ENCODE measurements at regions of chr19 and their contacts with region 1.

Region 1: DNA sequence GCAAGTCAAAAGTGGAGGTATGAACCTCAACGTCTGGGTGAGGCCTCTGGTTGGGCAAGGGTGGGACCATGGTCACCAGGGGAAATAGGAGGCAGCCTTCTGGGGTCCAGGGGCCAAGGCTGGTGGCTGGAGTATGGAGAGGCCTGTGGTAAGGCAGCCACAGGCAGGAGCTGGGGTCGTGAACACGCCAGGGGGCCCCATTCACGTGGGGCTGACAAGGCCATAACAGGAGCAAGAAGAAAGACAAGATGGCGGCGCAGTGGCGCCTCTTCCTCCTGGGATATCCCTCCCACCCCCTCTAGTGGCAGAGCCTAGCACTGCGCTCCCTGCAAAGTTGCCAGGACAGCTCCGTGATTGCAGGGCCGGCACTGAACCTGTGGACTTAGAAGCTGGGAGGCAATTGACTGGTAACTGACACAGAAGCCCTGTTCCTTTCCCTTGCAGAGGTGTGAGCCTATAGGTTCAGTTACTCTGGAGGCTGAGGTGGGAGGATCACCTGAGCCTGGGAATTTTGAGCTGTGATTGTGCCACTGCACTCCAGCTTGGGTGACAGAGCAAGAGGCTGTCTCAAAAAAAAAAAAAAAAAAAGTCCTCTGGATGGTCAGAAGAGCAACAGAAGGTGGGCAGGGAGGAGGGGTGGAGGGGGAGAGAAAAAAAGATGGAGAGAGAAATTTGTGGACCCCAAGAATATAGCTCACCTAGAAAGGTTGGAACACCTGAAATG is 19.7 kb upstream of the EDDM13 start:
- DNase-seq: peak; percentile 96
- ATAC-seq: peak; percentile 97
- H3K4me3 Mint-ChIP-seq: no peak overlapping the region
- H3K27ac Mint-ChIP-seq: no peak overlapping the region
- H3K4me1 Mint-ChIP-seq: no peaks in the 10 kb centered on the region
- H3K27me3 Mint-ChIP-seq: peaks cover 12% of the 10 kb centered on the region; the same call in 1 of the 2 replicates
- CTCF ChIP-seq: peak; percentile 91

Region 2: DNA sequence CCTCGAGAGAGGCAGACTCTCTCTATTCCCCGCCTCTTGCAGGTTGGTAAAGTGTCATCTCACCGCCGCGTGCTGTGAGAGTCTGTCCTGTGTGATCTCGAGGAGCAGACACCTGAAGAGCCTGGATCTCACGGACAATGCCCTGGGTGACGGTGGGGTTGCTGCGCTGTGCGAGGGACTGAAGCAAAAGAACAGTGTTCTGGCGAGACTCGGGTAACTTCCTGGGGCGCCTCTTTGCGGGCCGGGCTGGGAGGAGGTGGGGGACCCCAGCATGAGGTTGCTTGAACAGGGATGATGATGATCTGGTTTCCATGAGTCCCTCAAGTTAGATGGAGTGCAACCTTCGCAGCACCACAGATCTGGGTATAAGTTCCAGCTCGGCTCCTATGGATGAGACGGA is 199.3 kb before region 1 on chr19:
- CTCF ChIA-PET with region 1: no interaction called
- POLR2A ChIA-PET with region 1: no interaction called
- DNase-seq: no peak
- ATAC-seq: no peak
- H3K4me3 Mint-ChIP-seq: no peak overlapping the region
- H3K27ac Mint-ChIP-seq: no peak overlapping the region
- H3K4me1 Mint-ChIP-seq: no peaks in the 10 kb centered on the region
- H3K27me3 Mint-ChIP-seq: peaks cover 32% of the 10 kb centered on the region
- CTCF ChIP-seq: no peak

Region 3: DNA sequence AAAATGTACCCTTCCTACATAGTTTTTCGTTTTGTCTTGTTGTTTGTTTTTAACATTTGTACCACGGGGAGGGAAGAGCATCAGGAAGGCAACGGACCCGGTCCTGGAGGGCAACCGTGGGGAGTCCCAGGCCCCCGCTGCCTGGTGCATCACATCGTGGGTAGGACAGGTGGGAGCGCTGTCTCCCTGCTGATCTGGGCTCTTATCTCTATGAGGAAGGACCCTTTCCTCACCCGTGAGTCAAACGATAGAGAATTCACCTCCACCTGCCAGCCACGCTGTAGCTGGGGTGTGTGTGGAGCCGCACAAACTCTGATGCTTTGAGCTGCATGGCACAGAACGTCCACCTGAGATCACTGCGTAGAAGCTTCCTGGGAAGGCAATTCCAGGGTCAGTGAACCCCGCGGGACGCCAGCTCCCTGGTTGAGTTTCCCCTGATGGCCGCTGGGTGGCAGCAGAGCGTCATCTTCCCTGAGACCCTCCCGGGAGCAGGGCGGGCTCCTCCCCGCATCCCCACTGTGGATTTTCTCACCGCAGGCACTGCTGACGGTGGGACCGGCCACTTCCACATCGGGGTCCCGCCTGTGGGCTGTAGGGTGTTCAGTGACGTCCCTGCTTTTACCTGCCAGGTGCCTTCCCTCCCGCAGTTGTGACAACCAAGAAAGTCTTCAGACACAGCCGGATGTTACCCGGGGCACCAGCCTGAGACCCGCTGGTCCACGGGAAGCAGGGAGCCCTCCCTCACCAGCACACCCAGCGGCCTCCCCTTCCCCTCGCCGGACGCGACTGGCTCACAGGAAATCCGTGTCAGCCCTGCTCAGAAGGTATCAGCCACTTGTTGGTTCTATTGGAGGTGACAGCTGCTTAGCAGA is 186.5 kb before region 1 on chr19:
- CTCF ChIA-PET with region 1: interaction called, 41 read pairs
- POLR2A ChIA-PET with region 1: no interaction called
- DNase-seq: peak; percentile 86
- ATAC-seq: peak; percentile 90
- H3K4me3 Mint-ChIP-seq: peak overlapping the region; percentile 59
- H3K27ac Mint-ChIP-seq: no peak overlapping the region
- H3K4me1 Mint-ChIP-seq: peaks cover 3% of the 10 kb centered on the region; the same call in 1 of the 2 replicates
- H3K27me3 Mint-ChIP-seq: peaks cover 24% of the 10 kb centered on the region
- CTCF ChIP-seq: peak; percentile 90

Region 4: GRCh38 chr19:56080669-56081401 is 172.0 kb before region 1 on chr19:
- CTCF ChIA-PET with region 1: interaction called, 19 read pairs
- POLR2A ChIA-PET with region 1: no interaction called
- DNase-seq: peak; percentile 91
- ATAC-seq: peak; percentile 81
- H3K4me3 Mint-ChIP-seq: peak overlapping the region; percentile 85
- H3K27ac Mint-ChIP-seq: no peak overlapping the region
- H3K4me1 Mint-ChIP-seq: peaks cover 23% of the 10 kb centered on the region
- H3K27me3 Mint-ChIP-seq: peaks cover 15% of the 10 kb centered on the region
- CTCF ChIP-seq: peak; percentile 64

Region 5: DNA sequence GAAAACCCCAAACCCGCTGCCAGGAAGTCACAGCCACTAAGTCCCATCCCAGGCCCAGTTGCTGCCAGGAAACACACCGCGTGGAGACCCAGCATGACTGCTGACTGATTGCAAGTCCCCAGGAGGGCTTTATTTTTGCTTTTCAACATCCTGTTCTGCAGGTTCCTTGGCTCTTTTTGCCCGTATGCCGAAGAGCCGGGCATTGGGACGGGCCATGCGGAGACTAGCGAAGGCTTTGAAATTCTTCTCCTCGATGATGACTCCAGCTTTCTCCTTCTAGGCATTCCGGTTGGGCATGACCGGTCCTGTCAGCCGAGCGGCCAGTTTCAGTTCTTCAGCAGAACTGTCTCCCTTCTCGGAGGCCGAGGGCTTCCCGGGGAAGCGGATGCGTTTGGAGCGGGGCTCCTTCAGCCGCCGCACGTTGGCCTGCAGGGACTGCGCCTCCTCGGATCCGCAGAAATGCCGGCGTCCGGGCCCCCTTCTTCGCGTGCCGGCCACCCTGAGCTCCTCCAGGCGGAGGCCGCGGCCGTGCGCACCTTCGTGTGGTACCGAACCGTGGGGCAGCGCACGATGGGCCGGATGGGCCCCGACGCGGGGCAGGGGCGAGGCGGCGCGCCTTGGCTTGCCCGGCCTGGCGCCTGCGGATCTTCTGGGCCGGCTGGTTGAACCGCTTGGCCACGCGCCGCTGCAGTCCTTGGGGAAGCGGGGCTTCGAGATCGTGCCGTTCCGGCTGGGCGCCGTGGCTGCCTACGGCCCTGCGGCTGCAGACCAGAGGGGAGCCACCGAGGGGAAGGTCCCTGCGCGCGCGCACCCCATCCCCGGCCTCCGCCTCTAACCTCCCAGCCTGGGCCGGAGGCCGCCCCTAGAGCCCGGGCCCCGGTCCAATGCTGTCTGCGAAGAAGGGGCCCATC is 35.6 kb before region 1 on chr19:
- CTCF ChIA-PET with region 1: interaction called, 13 read pairs
- POLR2A ChIA-PET with region 1: no interaction called
- DNase-seq: peak; percentile 72
- ATAC-seq: peak; percentile 77
- H3K4me3 Mint-ChIP-seq: peak overlapping the region; percentile 57
- H3K27ac Mint-ChIP-seq: 0 out of 2 replicates have a peak overlapping the region, but pooled peaks have one; percentile 63
- H3K4me1 Mint-ChIP-seq: peaks cover 15% of the 10 kb centered on the region
- H3K27me3 Mint-ChIP-seq: peaks cover 15% of the 10 kb centered on the region
- CTCF ChIP-seq: no peak

Region 6: DNA sequence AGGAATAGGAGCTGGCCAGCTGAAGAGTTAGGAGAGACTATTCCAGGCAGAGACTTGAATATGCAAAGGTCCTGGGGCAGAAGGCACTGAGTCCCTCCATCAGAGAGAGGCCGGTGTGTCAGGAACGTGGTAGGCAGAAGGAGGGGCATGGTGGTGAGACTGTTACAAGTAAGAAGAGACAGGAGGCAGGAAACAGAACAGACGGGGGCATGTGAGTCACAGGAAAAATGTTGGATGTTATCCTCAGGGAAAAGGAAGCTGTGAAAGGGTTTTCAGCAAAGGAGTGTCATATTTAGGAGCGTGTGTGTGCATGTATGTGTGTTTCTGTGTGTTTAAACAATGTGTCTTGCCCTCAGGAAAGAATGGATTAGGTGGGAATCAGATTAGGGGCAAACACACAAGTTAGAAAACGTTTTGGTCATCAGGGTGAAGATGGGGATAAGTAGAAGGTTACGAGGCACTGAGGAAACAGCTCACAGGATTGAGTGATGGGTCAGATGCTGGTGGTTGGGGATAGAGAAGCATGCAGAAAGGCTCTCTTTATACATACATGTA is 20.8 kb after region 1 on chr19:
- CTCF ChIA-PET with region 1: interaction called, 17 read pairs
- POLR2A ChIA-PET with region 1: no interaction called
- DNase-seq: no peak
- ATAC-seq: no peak
- H3K4me3 Mint-ChIP-seq: no peak overlapping the region
- H3K27ac Mint-ChIP-seq: no peak overlapping the region
- H3K4me1 Mint-ChIP-seq: no peaks in the 10 kb centered on the region
- H3K27me3 Mint-ChIP-seq: no peaks in the 10 kb centered on the region; the same call in 1 of the 2 replicates
- CTCF ChIP-seq: no peak

Region 7: DNA sequence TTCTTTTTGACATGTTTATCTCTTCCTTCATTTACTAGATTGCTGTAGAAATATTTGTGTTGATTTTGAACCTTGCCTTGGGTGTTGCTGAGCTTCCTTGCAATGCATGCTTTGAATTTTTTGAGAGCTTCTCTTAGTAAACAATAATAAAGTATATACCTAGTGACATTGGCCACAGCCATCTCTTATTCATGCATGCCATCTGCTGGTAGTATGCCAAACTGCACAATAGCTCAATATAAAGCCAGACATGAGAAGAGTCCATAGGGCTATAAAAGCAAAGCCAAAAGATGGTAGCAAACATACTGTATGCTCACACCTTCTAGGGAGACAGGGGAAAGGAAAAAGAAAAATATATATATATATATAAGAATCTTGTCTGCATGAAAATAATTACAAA is 80.6 kb after region 1 on chr19:
- CTCF ChIA-PET with region 1: interaction called, 43 read pairs
- POLR2A ChIA-PET with region 1: no interaction called
- DNase-seq: peak; percentile 37
- ATAC-seq: peak; percentile 73
- H3K4me3 Mint-ChIP-seq: no peak overlapping the region
- H3K27ac Mint-ChIP-seq: no peak overlapping the region
- H3K4me1 Mint-ChIP-seq: no peaks in the 10 kb centered on the region
- H3K27me3 Mint-ChIP-seq: peaks cover 14% of the 10 kb centered on the region
- CTCF ChIP-seq: peak; percentile 41; the same call in 1 of the 2 replicates

Region 8: GRCh38 chr19:56348289-56348877 is 95.5 kb after region 1 on chr19:
- CTCF ChIA-PET with region 1: interaction called, 10 read pairs
- POLR2A ChIA-PET with region 1: no interaction called
- DNase-seq: peak; percentile 34
- ATAC-seq: 0 out of 2 replicates have a peak, but pooled peaks have one; percentile 30
- H3K4me3 Mint-ChIP-seq: no peak overlapping the region
- H3K27ac Mint-ChIP-seq: no peak overlapping the region
- H3K4me1 Mint-ChIP-seq: peaks cover 43% of the 10 kb centered on the region
- H3K27me3 Mint-ChIP-seq: no peaks in the 10 kb centered on the region
- CTCF ChIP-seq: peak; percentile 56

Region 9: DNA sequence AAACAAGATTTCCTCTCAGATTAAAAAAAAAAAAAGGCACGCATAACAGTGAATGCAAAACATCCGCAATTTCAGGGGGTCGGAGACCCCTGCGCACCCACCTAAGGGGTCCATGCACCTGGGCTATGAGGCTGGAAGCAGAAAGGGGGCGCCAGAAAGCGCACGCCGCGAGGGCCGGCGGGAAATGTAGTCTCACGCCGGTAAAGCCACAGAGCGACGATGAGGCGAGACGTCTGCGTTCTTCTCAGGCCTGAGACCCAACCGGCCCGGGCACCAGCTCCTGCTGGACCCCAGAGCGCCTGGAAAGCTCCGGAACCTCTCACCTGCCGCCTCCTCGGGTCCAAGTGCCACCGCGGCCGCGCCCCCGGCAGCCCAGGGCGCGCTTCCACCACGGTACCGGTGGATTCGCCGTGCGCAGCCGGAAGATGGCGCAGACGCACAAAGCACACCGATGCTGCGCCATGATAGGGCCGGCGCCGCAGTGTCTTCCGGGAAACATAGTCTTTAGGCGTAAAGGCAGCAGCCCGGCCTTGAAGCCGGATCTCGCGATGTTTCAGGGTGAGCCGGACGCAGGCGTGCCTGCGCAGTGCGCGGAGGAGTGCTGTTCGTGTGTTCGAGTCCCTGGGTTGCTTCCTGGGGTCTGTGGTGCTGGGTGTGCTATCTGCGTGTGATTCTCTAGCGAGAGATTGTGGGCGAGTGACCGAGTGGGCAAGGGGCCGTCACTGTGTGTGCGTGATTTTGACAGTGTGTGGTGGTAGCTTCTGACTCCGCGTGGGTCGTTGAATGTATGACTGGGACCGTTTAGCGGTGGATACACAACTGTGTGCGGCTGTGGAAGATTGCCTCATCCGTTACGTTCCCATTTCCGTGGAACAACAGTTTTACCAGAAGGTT is 140.5 kb after region 1 on chr19 and contains the start of gene ZNF582:
- CTCF ChIA-PET with region 1: no interaction called
- POLR2A ChIA-PET with region 1: no interaction called
- DNase-seq: peak; percentile 93
- ATAC-seq: peak; percentile 98
- H3K4me3 Mint-ChIP-seq: peak within 1 kb of the TSS; percentile 96
- H3K27ac Mint-ChIP-seq: peak within 1 kb of the TSS; percentile 89
- H3K4me1 Mint-ChIP-seq: peaks cover 9% of the 10 kb centered on the region
- H3K27me3 Mint-ChIP-seq: no peaks in the 10 kb centered on the region
- CTCF ChIP-seq: peak; percentile 59
- total RNA-seq, gene ZNF582: 3.5 to 5.7 TPM (median 5.2 TPM) in 3 replicates

Measured in WTC11 (cell line).